ENCODE measurements at regions of chr5 and their contacts with region 1.

Region 1: DNA sequence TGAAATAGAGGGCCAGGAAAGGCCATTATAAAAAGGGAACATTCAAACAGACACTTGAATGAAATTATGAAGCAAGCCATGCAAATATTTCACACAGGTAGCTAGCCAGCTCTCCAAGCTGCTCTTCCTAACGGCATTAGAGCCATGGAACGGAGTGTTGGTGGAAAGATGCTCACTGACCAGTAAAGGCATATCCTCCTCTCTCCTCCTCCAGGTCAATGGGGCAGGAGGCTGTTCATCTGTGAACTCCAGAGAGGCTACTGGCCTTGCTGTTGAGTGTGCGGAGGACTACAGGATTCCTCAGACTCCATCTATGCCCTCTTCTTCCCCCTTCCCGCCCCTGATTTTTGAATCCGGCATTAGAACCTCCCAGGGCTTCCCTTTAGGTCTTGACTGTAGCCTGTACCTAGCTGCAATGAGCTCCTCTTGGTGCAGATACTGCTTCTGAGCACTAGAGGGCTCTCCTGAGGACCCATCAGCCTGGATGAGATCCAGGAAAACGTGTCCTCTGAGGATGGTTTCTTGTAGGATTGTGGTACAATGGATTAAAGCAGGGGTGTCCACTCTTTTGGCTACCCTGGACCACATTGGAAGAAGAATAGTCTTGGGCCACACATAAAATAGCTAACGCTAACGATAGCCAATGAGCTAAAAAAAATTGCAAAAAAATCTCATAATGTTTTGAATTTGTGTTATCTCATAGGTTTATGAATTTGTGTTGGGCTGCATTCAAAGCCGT is 162.2 kb downstream of the SREK1 start:
- DNase-seq: no peak
- ATAC-seq: peak; percentile 87

Region 2: GRCh38 chr5:64680289-64680688 is 1626.0 kb before region 1 on chr5:
- intact Hi-C with region 1: no loop called
- DNase-seq: no peak
- ATAC-seq: no peak

Region 3: GRCh38 chr5:66041627-66042026 is 264.6 kb before region 1 on chr5:
- intact Hi-C with region 1: no loop called
- DNase-seq: no peak
- ATAC-seq: no peak

Region 4: DNA sequence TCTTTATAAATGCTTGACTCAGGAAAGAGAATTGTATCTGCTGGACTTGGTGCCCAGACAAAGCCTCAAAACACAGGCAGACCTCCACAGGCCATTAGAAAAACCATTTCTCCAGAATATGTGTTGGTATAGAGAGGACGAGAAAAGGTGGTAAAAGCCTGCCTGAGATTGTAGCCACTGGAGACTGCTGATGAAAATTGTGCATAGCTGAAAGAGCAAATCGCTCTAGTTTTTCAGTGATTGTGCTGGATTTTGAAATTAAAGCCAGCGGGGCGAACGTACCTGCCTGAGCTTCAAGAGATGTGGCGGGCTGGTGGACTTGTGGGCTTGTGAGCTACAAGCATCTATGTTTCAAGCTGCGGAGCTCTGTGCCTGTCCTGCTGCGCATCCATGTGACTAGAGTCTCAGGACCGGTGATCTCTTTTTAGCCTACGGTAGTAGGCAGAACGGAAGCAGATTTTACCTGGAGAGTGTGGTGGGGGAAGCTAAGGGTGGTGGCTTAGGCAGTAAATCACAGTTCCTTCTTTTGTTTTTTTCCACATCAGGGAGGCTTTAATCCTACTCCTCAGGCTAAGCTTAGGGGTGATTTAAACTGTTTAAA is 31.5 kb after region 1 on chr5:
- intact Hi-C with region 1: no loop called
- DNase-seq: no peak
- ATAC-seq: no peak

Region 5: DNA sequence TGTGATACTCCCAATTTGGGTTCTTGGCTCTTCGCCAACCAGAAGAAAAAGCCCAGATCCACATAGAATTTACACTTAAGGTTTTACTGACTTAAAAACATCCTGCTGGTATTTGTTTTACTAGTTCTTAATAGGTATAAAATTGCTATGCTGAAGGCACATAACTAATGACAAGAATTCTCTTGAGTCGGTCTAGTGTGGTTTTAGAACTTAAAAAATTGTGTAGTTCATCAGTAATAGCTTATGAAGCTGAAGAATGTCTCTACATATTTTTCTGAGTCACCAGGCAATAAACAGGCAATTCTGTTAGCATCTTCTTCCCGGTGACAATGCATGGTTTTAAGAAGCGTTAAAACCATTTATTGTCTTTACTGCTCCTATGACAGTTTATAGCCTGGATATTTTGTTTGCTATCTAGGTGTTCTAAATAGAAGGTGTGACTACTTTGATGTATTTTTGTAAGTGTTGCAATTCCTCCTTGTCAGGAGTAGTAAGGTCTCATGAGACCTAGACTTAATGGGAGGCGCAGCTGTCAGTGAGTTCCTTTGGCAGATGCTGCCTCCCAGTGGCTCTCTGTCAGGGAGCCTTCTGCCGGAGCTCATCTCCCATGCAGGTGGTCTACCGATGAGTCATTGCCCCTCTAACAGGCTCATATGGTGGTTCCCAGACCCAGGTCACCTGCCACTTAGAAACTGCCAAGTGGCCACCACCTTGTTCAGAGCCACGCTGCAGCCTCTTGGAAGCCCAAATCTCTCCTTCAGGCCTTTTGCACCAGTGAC is 463.8 kb after region 1 on chr5:
- intact Hi-C with region 1: loop called (anchors 10 kb)
- DNase-seq: no peak
- ATAC-seq: no peak

Region 6: GRCh38 chr5:66796305-66797292 is 490.3 kb after region 1 on chr5:
- intact Hi-C with region 1: no loop called
- DNase-seq: no peak
- ATAC-seq: no peak

Measured in sciatic nerve (tissue), 2 donors.